Caco-2 (cell line): ENCODE measurements at regions of chr1 and their contacts with region 1.

Region 1: GRCh38 chr1:206982216-206982615 is 12.0 kb upstream of the FCAMR start:
- DNase-seq: peak; percentile 69 to 71
- H3K4me3 ChIP-seq: no peak overlapping the region
- H3K4me3 Mint-ChIP-seq: no peak overlapping the region
- H3K27ac Mint-ChIP-seq: no peak overlapping the region
- H3K4me1 ChIP-seq: peaks cover 18% of the 10 kb centered on the region
- H3K4me1 Mint-ChIP-seq: peaks cover 22% of the 10 kb centered on the region
- H3K27me3 ChIP-seq: no peaks in the 10 kb centered on the region
- H3K27me3 Mint-ChIP-seq: no peaks in the 10 kb centered on the region
- CTCF ChIP-seq: peak; percentile 76 to 89

Region 2: DNA sequence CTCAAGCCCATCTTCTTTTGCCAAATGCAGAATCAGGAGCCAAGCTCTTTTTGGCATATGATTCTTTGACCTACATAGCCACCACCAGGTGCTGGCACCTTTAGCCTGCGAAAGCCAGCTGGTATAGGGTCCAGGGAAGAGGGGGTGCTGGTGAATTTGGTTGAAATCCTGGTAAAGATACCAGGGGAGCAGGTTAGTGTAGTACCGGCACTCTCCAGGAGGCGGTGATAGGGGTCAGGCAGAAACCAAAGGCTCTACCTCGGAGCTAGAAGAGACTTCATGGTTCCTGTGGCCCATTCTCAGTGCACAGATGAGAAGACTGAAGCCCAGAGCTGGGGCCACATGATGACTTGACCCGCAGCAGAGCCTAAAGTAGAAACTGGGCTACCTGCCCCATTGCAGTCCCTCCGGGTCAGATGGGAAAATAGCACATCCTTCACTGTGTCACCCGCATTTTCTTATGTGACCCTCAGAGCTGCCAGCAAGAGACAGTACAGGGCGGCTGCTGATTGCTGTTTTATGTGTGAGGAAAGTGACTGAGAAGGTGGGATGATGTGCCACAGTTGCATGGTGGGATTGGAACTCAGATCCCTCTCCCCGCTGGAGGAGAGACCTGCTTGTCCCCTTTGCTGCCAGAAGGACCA is 247.6 kb before region 1 on chr1:
- CTCF ChIA-PET with region 1: interaction called, 5 read pairs
- POLR2A ChIA-PET with region 1: no interaction called
- intact Hi-C with region 1: loop called (anchors 1 kb)
- DNase-seq: peak in 1 of 2 experiments; percentile 75
- H3K4me3 ChIP-seq: no peak overlapping the region
- H3K4me3 Mint-ChIP-seq: no peak overlapping the region
- H3K27ac Mint-ChIP-seq: no peak overlapping the region
- H3K4me1 ChIP-seq: no peaks in the 10 kb centered on the region
- H3K4me1 Mint-ChIP-seq: peaks cover 21% of the 10 kb centered on the region
- H3K27me3 ChIP-seq: no peaks in the 10 kb centered on the region
- H3K27me3 Mint-ChIP-seq: no peaks in the 10 kb centered on the region
- CTCF ChIP-seq: peak; percentile 84 to 85

Region 3: DNA sequence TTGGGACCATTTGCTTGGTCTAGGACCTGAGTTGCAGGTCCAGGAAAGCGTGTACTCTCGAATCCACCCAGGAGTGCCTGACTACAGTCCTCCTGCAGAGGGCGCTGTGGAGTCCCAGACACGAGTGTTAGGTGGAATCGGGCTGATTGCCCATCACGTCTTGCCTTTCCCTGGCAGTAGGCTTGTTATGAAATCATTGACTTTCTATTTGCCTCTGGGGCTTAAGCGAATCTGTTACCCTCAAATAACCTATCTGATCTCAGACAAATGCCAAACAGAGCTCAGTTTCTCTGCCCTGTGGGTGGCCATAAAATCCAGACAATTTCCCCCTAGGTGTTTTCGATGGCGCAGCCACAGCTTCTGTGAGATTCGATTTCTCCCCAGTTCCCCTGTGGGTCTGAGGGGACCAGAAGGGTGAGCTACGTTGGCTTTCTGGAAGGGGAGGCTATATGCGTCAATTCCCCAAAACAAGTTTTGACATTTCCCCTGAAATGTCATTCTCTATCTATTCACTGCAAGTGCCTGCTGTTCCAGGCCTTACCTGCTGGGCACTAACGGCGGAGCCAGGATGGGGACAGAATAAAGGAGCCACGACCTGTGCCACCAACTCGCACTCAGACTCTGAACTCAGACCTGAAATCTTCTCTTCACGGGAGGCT is 117.1 kb before region 1 on chr1 and contains the start of gene IL20:
- CTCF ChIA-PET with region 1: no interaction called
- POLR2A ChIA-PET with region 1: no interaction called
- intact Hi-C with region 1: loop called (anchors 1 kb)
- DNase-seq: peak; percentile 65 to 73
- H3K4me3 ChIP-seq: no peak within 1 kb of the TSS
- H3K4me3 Mint-ChIP-seq: no peak within 1 kb of the TSS
- H3K27ac Mint-ChIP-seq: no peak within 1 kb of the TSS
- H3K4me1 ChIP-seq: no peaks in the 10 kb centered on the region
- H3K4me1 Mint-ChIP-seq: no peaks in the 10 kb centered on the region
- H3K27me3 ChIP-seq: no peaks in the 10 kb centered on the region
- H3K27me3 Mint-ChIP-seq: peaks cover 15% of the 10 kb centered on the region
- CTCF ChIP-seq: peak; percentile 71 to 73
- total RNA-seq, gene IL20: not detected in 2 replicates

Region 4: DNA sequence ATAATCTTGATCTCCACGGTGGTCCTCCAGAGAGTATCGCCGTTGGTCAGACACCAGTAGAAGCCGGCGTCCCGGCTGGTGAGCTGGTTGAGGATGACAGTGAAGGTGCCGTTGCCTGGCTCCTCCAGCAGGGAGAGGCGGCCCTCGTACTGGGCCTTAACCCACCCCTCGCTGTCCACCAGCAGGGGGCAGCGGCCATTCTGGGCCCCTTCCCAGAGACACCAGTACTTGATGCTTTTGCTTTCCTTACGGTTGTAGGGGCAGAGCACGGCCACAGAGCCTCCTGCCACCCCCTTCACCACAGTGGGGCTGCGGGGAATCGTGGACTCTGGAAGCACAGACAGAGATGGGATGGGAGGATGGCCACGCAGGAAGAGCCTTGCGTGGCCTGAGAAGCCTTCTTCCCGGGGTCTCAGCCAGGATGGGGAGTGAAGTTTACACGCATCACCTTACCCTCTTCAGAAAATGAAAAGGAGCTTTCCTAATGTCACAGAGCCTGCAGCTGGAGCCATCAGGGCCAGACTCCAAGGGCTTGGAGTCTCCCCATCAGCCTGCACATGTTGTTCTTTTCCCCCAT is 46.6 kb before region 1 on chr1:
- CTCF ChIA-PET with region 1: interaction called, 51 read pairs
- POLR2A ChIA-PET with region 1: no interaction called
- intact Hi-C with region 1: loop called (anchors 1 kb)
- DNase-seq: peak; percentile 66 to 78
- H3K4me3 ChIP-seq: no peak overlapping the region
- H3K4me3 Mint-ChIP-seq: no peak overlapping the region
- H3K27ac Mint-ChIP-seq: no peak overlapping the region
- H3K4me1 ChIP-seq: no peaks in the 10 kb centered on the region
- H3K4me1 Mint-ChIP-seq: no peaks in the 10 kb centered on the region
- H3K27me3 ChIP-seq: no peaks in the 10 kb centered on the region
- H3K27me3 Mint-ChIP-seq: no peaks in the 10 kb centered on the region
- CTCF ChIP-seq: peak; percentile 86 to 94

Region 5: GRCh38 chr1:207052911-207053769 is 70.9 kb after region 1 on chr1 and contains the start of gene PFKFB2:
- CTCF ChIA-PET with region 1: no interaction called
- POLR2A ChIA-PET with region 1: no interaction called
- intact Hi-C with region 1: no loop called
- DNase-seq: peak; percentile 100
- H3K4me3 ChIP-seq: peak within 1 kb of the TSS; percentile 73
- H3K4me3 Mint-ChIP-seq: peak within 1 kb of the TSS; percentile 94
- H3K27ac Mint-ChIP-seq: peak within 1 kb of the TSS; percentile 97
- H3K4me1 ChIP-seq: peaks cover 4% of the 10 kb centered on the region
- H3K4me1 Mint-ChIP-seq: peaks cover 15% of the 10 kb centered on the region
- H3K27me3 ChIP-seq: no peaks in the 10 kb centered on the region
- H3K27me3 Mint-ChIP-seq: no peaks in the 10 kb centered on the region
- CTCF ChIP-seq: no peak
- total RNA-seq, gene PFKFB2: 36.4 and 38.9 TPM in 2 replicates

Region 6: GRCh38 chr1:207077470-207078377 is 95.5 kb after region 1 on chr1:
- CTCF ChIA-PET with region 1: no interaction called
- POLR2A ChIA-PET with region 1: no interaction called
- intact Hi-C with region 1: loop called (anchors 1 kb)
- DNase-seq: peak; percentile 58 to 81
- H3K4me3 ChIP-seq: no peak overlapping the region
- H3K4me3 Mint-ChIP-seq: no peak overlapping the region
- H3K27ac Mint-ChIP-seq: no peak overlapping the region
- H3K4me1 ChIP-seq: no peaks in the 10 kb centered on the region
- H3K4me1 Mint-ChIP-seq: no peaks in the 10 kb centered on the region
- H3K27me3 ChIP-seq: no peaks in the 10 kb centered on the region
- H3K27me3 Mint-ChIP-seq: no peaks in the 10 kb centered on the region
- CTCF ChIP-seq: peak; percentile 89 to 92